SK-N-SH (cell line): ENCODE measurements at regions of chr2 and their contacts with region 1.

Region 1: GRCh38 chr2:85066874-85067351 is 66.3 kb upstream of the TCF7L1 start:
- DNase-seq: peak; percentile 75
- H3K4me3 ChIP-seq: peak overlapping the region; percentile 7 to 24; a peak in 3 of 4 replicates
- H3K27ac ChIP-seq: no peak overlapping the region
- H3K4me1 ChIP-seq: peaks cover 0 to 16% of the 10 kb centered on the region in 2 experiments; a peak in 1 of 4 replicates
- H3K27me3 ChIP-seq: no peaks in the 10 kb centered on the region
- CTCF ChIP-seq: peak; percentile 91
- EP300 ChIP-seq: peak in 1 of 2 experiments; percentile 25; a peak in 1 of 4 replicates
- RAD21 ChIP-seq: peak; percentile 93

Region 2: DNA sequence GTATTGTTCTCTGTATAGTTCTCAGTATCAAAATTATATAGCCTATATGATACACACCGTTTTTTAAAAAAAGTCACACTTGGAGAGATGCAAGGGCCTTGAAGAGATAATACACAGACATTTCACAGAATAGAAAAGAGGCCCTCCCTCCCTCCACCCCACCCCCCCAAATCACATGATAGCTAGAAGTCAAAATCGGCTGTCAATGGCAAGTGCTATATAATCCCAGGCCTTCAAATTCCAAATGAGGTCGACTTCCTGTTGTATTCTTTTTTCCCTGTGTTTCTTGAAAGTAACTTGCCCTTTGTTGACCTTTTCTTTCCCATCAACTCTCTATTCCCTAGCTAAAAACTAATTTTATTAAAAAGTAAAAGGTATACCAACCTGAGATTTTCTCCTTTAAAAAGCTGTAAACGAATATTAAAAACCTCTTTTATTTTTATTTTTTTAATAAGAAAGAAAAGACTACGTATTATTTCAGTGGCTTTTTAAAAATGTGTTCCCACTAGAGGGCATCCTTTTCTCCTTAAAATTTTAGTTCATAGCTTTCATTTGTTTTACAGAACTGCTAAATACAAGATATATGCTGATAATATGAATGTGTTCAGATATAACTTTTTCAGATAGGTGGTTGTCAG is 49.4 kb before region 1 on chr2:
- CTCF ChIA-PET with region 1: interaction called, 20 read pairs
- POLR2A ChIA-PET with region 1: no interaction called
- DNase-seq: peak; percentile 21
- H3K4me3 ChIP-seq: no peak overlapping the region; a peak in 1 of 4 replicates
- H3K27ac ChIP-seq: peak overlapping the region; percentile 23 to 35; a peak in 3 of 4 replicates
- H3K4me1 ChIP-seq: peaks cover 0 to 52% of the 10 kb centered on the region in 2 experiments; a peak in 3 of 4 replicates
- H3K27me3 ChIP-seq: no peaks in the 10 kb centered on the region
- CTCF ChIP-seq: peak; percentile 68
- EP300 ChIP-seq: no peak
- RAD21 ChIP-seq: peak; percentile 25; the same call in 1 of the 2 replicates

Region 3: GRCh38 chr2:85111819-85112281 is 44.9 kb after region 1 on chr2:
- CTCF ChIA-PET with region 1: interaction called, 12 read pairs
- POLR2A ChIA-PET with region 1: no interaction called
- DNase-seq: no peak
- H3K4me3 ChIP-seq: no peak overlapping the region
- H3K27ac ChIP-seq: no peak overlapping the region
- H3K4me1 ChIP-seq: no peaks in the 10 kb centered on the region
- H3K27me3 ChIP-seq: no peaks in the 10 kb centered on the region; the same call in 1 of the 2 replicates
- CTCF ChIP-seq: no peak
- EP300 ChIP-seq: no peak
- RAD21 ChIP-seq: no peak

Region 4: DNA sequence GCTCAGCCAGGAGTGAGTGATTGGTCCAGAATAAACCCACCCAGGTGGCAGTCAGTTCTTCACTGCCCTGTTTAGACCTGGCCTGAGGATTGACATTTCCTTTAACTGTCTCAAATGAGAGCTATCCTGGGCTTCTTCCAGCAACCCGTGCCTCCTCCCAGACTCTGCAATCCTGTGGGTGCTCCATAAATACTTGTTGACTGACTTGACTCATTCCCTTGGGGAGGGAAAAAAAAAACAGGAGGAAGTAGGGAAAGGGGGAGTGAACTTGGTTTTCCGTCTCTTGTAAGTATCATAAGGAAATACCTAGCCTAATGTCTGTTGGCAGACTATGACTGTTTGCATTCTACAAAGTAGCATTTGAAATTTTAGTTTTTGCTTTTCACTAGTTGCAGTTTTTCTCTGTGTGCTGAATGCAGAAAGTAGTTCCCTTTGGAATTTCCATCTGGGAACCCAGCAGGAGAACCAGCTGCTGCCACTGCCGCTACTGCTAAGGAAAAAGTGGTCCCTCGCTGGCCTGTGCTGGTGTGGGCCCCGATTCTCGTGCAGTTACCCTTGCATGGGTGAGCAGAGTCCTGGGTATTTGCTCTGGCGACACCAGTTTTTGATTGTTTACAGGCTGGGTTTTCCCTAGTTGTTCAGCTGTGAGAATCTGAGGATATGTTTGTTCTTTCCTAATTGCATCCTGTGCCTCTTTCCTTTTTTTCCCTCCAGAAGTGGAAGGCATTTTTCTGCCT is 182.0 kb after region 1 on chr2:
- CTCF ChIA-PET with region 1: interaction called, 24 read pairs
- POLR2A ChIA-PET with region 1: no interaction called
- DNase-seq: no peak
- H3K4me3 ChIP-seq: no peak overlapping the region
- H3K27ac ChIP-seq: peak overlapping the region; percentile 63 to 64; a peak in 3 of 4 replicates
- H3K4me1 ChIP-seq: peaks cover 35 to 38% of the 10 kb centered on the region in 2 experiments
- H3K27me3 ChIP-seq: no peaks in the 10 kb centered on the region
- CTCF ChIP-seq: no peak
- EP300 ChIP-seq: peak in 1 of 2 experiments; percentile 64; a peak in 1 of 4 replicates
- RAD21 ChIP-seq: no peak

Region 5: DNA sequence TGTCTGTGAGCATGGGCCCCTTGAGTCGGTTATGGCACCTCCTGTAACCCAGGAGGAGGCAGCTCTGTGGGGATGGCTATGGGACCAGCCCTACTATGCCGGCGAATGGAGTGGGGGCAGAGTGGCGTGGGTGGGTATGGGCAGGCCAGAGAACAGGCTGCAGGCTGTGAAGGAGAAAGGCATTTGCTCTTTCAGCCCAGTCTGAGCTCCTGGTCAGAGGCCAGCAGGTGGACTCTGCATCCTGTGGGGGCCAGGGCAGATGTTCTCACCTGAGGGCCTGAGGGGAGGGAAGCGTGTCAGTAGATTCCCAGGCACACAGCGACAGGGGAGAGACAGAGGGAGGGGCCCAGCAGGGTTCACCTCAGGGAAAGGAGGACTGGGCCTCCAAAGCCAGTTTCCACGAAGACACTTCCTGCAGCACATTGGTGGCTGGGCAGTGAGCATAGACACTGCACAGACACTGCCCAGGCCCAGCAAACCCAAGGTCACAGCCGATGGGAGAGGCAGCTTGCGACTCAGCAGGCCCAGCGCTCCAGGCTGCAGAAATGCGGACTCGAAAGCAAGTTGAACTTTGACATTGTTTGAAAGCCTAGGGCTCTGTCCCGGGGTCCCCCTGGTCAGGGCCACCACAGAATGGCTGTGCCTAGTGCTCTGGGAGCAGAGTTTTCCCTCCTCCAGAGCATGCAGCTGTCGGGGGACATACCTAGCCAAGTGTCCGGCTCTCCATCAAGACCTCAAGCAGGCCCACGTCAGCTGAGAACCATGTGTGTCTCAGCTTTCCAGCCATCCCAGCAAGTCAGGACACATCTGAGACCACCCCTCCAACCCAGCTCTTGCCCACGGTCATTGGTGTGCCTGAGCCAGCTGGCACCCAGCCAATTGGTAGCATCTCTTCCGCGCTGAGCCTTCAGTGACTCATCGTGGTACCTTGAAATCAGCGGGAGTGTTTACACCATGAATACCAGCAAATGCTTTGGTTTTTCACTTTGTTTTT is 207.1 kb after region 1 on chr2:
- CTCF ChIA-PET with region 1: interaction called, 20 read pairs
- POLR2A ChIA-PET with region 1: no interaction called
- DNase-seq: peak; percentile 66
- H3K4me3 ChIP-seq: no peak overlapping the region; a peak in 1 of 4 replicates
- H3K27ac ChIP-seq: no peak overlapping the region
- H3K4me1 ChIP-seq: peaks cover 21 to 39% of the 10 kb centered on the region in 2 experiments
- H3K27me3 ChIP-seq: no peaks in the 10 kb centered on the region
- CTCF ChIP-seq: no peak
- EP300 ChIP-seq: no peak
- RAD21 ChIP-seq: no peak

Region 6: DNA sequence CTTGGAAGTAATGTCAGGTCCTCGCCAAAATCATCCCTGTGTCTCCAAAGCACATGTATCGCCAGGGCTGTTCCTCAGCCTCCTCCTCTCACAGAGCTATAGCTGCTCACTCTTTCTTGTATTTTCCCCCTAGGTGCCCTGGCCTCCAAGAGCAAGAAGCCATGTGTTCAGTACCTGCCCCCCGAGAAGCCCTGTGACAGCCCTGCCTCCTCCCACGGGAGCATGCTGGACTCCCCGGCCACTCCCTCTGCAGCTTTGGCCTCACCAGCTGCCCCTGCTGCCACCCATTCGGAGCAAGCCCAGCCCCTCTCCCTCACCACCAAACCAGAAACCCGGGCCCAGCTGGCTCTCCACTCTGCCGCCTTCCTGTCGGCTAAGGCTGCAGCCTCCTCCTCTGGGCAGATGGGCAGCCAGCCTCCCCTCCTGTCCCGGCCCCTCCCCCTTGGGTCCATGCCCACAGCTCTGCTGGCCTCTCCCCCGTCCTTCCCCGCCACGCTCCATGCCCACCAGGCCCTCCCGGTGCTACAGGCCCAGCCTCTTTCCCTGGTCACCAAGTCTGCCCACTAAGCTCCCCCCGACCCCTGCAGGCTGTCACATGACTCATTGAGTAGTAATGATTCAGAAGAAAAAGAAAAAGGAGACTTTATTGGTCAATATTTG is 242.1 kb after region 1 on chr2:
- CTCF ChIA-PET with region 1: interaction called, 15 read pairs
- POLR2A ChIA-PET with region 1: no interaction called
- DNase-seq: peak; percentile 95
- H3K4me3 ChIP-seq: peak overlapping the region in 1 of 2 experiments; percentile 3; a peak in 1 of 4 replicates
- H3K27ac ChIP-seq: peak overlapping the region; percentile 51 to 69
- H3K4me1 ChIP-seq: peaks cover 10 to 17% of the 10 kb centered on the region in 2 experiments; a peak in 2 of 4 replicates
- H3K27me3 ChIP-seq: no peaks in the 10 kb centered on the region
- CTCF ChIP-seq: no peak
- EP300 ChIP-seq: no peak
- RAD21 ChIP-seq: no peak

Region 7: GRCh38 chr2:85511008-85511811 is 444.3 kb after region 1 on chr2:
- CTCF ChIA-PET with region 1: no interaction called
- POLR2A ChIA-PET with region 1: no interaction called
- DNase-seq: no peak
- H3K4me3 ChIP-seq: no peak overlapping the region
- H3K27ac ChIP-seq: no peak overlapping the region
- H3K4me1 ChIP-seq: peaks cover 6 to 7% of the 10 kb centered on the region in 2 experiments; a peak in 2 of 4 replicates
- H3K27me3 ChIP-seq: no peaks in the 10 kb centered on the region
- CTCF ChIP-seq: no peak
- EP300 ChIP-seq: no peak
- RAD21 ChIP-seq: no peak